ENCODE measurements at regions of chr4 and their contacts with region 1.

Region 1: GRCh38 chr4:140359562-140360427 is 13.7 kb upstream of the SCOC start:
- DNase-seq: no peak
- H3K4me3 ChIP-seq: no peak overlapping the region
- CTCF ChIP-seq: peak; percentile 73

Region 2: GRCh38 chr4:139656614-139657486 is 702.9 kb before region 1 on chr4:
- CTCF ChIA-PET with region 1: interaction called, 11 read pairs
- POLR2A ChIA-PET with region 1: no interaction called
- DNase-seq: no peak
- H3K4me3 ChIP-seq: no peak overlapping the region
- CTCF ChIP-seq: peak; percentile 86

Region 3: DNA sequence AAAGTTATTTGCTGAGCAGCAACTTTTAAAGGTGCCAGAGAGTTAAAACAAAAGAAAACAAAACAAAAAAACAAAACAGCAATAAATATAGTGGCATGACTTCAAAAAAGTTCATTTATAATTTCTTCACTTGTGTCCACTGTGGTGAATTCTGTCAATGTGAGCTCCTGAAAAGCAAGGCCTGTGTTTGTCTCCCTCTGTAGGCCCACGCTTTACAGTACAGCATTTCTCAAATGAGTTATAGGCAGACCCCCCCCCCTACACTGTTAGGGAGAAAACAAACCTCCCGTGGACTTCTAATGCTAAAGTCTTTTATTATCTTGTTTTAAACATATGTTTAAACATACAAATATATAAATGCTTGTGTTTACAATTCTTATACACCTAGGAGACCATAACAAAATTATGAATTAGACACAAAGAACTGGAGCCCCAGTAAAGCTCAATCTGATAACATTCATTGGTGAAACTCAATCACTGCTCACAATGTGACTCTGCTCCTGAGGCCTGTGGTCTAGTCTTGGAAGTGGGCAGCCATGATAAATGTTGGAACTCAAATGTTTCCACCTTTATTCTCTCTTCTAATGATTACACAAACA is 33.3 kb before region 1 on chr4:
- CTCF ChIA-PET with region 1: interaction called, 25 read pairs
- POLR2A ChIA-PET with region 1: no interaction called
- DNase-seq: no peak
- H3K4me3 ChIP-seq: no peak overlapping the region
- CTCF ChIP-seq: peak; percentile 68

Region 4: DNA sequence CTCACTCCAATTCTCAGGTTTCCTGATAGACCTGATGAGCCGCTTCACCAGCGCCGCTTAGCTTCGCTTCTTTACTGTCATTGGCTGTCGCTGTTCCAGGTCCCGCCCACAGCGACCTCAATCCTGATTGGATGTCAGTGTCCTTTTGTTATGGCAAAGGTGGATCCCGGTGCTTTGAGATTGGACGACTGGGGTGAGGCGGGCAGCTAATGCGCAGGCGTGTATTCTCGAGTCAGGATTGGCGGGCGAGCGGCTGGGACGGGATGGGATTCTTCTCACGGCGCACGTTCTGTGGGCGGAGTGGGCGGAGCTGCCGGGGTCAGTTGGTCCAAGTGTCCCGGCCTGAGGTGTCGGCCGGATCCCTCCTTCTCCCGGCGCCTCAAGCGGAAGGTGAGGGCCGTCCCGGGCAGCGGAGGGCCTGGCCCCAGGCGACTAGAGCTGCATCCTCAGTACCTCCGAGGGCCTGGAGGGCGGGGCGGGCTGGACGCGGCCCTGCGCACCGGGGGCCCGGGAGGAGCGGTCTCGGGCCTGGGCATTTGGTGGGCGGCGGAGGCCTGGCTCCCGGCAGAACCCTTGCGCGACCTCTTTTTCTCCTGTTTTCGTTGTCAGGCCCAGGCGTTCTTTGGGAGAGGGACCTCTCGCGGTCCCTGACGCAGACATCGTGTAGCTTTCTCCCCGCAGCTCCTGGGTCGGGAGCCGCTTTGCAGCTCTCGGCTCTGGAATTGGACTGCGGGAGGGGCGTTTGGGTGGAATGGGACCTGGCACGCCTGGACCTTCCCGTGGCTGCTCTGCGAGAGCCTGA is 13.7 kb after region 1 on chr4 and contains the start of gene SCOC:
- CTCF ChIA-PET with region 1: interaction called, 46 read pairs
- POLR2A ChIA-PET with region 1: interaction called, 3 read pairs
- DNase-seq: peak; percentile 91
- H3K4me3 ChIP-seq: peak within 1 kb of the TSS; percentile 76
- CTCF ChIP-seq: no peak

Region 5: DNA sequence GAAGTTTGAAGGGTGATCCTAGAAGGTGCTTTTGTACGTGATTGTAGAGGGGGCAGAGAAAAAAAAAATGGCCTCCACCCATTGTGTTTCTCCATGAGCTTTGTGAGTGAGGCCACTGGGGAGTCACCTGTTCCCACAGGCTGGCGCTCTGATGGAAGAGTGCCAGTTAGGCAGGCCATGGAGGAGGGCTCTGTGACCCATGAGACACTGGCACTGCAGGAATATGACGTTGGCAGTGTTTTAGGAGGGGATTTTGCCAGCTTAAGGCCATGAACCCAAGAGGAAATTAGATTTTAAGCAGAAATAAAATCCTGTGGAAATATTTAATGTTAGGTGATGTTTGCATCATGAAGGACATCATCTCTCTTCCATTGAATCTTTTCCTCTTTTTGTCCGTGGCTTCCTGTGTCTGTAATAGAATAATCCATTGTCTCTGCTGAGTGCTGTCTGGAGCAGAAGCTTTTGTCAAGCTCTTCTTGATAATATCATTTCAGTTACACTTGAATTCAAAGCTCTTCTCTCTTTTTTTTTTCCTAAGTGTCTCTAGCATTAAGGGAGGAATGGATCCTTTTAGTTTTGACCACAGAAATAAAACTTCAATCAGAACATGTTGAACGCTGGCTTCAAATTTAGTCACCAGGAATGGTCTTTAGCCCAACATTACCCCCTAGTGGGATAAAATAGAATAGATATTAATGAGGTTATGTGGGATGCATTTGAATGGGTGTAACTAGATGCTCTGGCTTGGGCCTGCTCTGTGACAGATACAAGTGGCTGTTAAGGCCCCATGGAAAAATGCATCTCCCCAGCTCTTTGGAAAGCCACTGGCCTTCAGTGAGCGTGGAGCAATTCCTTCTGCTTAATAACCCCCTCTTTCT is 250.0 kb after region 1 on chr4:
- CTCF ChIA-PET with region 1: interaction called, 103 read pairs
- POLR2A ChIA-PET with region 1: no interaction called
- DNase-seq: no peak
- H3K4me3 ChIP-seq: no peak overlapping the region
- CTCF ChIP-seq: peak; percentile 33

Region 6: GRCh38 chr4:140851032-140851636 is 491.3 kb after region 1 on chr4:
- CTCF ChIA-PET with region 1: interaction called, 110 read pairs
- POLR2A ChIA-PET with region 1: no interaction called
- DNase-seq: no peak
- H3K4me3 ChIP-seq: no peak overlapping the region
- CTCF ChIP-seq: peak; percentile 63